Heart left ventricle (tissue), 16 donors: ENCODE measurements at regions of chr2 and their contacts with region 1.

Region 1: DNA sequence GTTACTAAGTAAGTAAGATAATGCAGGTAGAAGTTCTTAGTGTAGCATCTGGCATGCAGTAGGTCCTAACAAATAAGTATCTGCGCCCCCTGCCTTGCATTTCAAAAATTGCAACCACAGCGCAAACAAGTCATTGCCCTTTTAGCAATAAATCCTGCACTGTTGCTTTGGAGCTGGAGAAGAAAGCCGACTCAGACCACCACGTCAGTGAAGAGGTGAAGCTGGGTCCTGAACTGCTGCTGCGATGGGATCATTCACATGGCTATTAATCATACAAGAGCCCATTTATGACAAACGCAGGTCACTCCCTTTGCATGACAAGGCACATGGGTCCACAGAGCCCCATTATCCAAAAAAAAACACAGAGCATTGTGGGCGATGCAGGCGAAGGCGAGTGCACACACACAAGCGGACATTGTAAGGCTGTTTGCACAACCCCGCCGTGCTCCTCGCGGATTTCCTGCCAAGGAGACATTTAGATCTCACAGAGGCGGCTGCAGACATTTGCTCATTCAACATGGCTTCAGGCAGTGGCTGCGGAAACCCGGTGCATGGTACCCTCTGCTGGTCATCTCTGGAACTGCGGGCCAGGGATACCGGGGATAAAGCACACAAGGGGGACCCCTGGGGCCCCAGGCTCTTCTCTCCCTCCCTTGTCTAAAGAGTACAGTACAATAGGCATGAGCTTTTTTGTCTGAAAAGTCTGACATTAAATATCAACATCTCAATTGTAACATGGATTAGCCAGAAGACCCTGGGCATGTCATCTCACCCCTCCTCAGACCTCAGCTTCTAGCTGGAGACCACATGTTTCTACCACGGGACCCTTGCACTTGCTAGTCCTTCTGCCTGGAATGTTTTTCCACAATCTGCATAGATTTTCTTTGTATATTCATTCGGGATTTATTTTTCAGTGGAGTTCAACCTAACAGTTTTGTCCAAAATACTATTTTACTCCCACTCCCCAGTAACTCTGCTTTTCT is 56.7 kb downstream of the CYRIA start:
- DNase-seq: peak; percentile 81 to 91 (median 85)
- ATAC-seq: peak; percentile 83 to 92 (median 88)
- H3K4me3 ChIP-seq: peak overlapping the region in 11 of 12 donors; percentile 10 to 56 (median 51)
- H3K27ac ChIP-seq: peak overlapping the region in 3 of 12 donors; percentile 32 to 77 (median 60)
- H3K4me1 ChIP-seq: peaks cover 0 to 36% (median 10%) of the 10 kb centered on the region in 12 donors
- H3K27me3 ChIP-seq: no peaks in the 10 kb centered on the region
- CTCF ChIP-seq: peak; percentile 84 to 96 (median 93)
- POLR2A ChIP-seq: no peak

Region 2: DNA sequence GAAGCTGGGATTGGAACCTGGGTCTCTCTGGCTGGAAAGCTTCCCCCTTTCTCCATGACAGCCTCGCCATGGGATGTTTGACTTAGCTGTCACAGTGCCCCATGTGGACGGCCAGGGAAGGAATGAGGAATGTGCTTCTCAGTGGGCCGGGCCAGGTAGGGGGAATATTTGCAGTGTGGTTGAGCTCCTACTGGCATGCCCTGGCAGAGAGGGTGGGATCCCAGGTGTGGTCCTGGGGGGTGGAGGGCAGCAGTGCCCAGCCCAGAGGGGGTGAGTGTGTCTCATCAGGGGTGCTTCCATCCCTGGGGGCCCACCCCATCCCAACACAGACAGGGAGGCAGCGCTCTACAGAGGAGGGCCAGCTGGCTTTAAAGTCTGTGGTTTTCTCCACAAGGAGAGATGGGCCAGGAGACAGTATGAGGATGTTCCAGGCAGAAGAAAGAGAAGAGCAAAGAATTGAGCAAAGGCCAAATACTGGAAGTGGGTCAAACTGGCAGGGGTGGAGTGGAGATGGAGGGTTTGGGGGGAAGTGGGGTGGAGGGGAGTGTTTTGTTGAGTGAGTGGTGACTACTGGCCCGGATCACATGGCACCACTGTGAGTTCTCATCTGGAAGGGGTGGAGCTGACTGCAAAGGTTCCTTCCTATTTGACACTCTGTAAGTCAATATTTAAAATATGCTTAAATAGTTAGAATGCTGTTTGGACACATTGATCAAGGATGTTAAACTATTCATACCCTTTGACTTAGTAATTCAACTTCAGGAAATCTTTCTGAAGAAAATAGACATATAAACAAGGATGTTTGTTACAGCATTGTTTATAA is 574.6 kb before region 1 on chr2:
- intact Hi-C with region 1: no loop called
- DNase-seq: no peak
- ATAC-seq: peak in 1 of 4 donors; percentile 28
- H3K4me3 ChIP-seq: no peak overlapping the region
- H3K27ac ChIP-seq: no peak overlapping the region
- H3K4me1 ChIP-seq: no peaks in the 10 kb centered on the region
- H3K27me3 ChIP-seq: peaks cover 0 to 7% (median 0%) of the 10 kb centered on the region in 9 donors
- CTCF ChIP-seq: peak in 1 of 12 donors; percentile 15
- POLR2A ChIP-seq: no peak

Region 3: DNA sequence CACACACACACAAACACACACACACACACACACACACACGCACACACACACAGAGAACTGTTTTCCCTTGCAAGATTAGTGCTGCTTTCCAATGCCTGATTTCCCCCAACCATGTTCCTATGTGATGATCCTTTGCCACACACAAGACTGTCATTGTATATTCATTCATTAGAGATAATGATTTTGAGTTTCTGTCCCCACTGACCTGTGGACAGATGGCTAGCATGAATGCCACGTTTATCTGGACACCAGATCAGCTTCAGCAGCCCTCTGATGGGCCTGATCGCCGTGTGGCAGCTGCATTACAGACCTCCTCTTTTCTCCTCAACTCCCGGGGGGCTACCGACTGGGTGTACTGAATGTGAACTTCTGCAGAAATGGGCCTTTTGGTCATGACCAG is 315.6 kb before region 1 on chr2:
- intact Hi-C with region 1: loop called in 1 of 10 experiments (anchors 10 kb)
- DNase-seq: no peak
- ATAC-seq: no peak
- H3K4me3 ChIP-seq: no peak overlapping the region
- H3K27ac ChIP-seq: no peak overlapping the region
- H3K4me1 ChIP-seq: no peaks in the 10 kb centered on the region
- H3K27me3 ChIP-seq: peaks cover 0 to 21% (median 0%) of the 10 kb centered on the region in 9 donors
- CTCF ChIP-seq: no peak
- POLR2A ChIP-seq: no peak

Region 4: DNA sequence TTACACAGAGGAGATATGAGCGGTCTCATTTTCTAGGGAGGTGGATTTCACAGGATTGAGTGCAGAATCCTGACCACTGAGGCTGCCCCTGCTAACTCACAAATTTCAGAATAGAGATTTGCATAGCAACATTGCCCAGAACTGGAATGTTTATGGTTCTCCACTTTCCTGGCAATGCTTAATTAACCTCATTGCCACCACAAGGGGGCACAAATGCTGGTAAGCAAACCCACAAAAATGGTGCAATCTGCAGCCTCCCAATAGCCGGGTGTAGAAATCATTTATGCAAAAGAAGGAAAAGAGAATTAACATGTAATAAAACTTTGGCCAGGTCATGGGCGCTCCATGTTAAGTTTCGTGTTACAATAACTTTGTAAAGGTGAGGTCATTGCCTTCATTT is 55.7 kb before region 1 on chr2:
- intact Hi-C with region 1: loop called (anchors 1 to 5 kb)
- DNase-seq: peak in 3 of 5 donors; percentile 9 to 31 (median 30)
- ATAC-seq: no peak
- H3K4me3 ChIP-seq: no peak overlapping the region
- H3K27ac ChIP-seq: no peak overlapping the region
- H3K4me1 ChIP-seq: no peaks in the 10 kb centered on the region
- H3K27me3 ChIP-seq: no peaks in the 10 kb centered on the region
- CTCF ChIP-seq: peak; percentile 38 to 68 (median 57)
- POLR2A ChIP-seq: no peak